ENCODE measurements at regions of chr16 and their contacts with region 1.

Region 1: DNA sequence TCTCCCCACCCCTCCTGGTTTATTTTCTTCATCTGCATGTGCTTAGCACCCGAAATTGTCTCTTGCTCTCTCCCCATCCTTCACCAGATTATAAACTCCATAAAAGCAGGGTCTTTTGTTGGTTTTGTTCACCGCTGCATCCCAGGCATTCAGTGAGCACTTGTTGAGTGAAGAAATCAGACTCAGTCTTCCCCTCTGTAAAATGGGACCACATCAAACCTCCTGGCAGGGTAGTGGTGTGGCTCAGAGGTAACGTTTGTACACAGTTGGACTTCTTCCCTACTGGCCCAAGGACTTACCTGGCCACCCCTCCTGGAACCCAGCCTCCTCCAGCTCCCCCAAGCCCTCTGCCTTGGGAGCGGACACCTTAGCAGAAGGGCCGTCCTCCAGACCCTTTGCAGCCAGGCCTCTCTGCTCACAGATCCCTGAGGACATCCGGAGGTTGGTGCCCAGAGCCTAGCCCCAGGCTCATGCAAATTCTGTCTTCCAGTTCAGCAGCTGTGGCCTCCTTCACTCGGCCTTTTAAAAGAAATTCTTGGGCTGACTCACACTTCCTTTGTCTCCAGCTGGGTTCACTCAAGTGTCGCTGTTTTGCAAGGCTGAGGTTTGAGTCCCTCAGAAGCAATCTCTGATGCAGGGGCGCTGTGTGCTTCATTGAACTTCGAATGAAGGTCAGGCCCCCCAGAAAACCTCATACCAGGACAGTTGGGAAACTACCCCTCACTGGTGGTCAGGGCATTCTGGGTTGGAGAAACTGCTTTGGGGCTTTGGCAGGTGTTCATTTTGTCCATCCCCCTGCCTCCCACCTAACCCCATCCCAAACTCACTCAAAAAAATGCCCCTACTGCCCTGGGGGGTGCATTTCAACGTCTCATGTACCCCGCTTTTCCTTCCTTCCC is 16.8 kb upstream of the RMI2 start:
- DNase-seq: peak; percentile 90
- ATAC-seq: peak; percentile 70
- H3K4me3 ChIP-seq: peak overlapping the region in 4 of 5 experiments; percentile 30 to 64 (median 36)
- H3K4me3 Mint-ChIP-seq: peak overlapping the region; percentile 81
- H3K27ac ChIP-seq: peak overlapping the region; percentile 91 to 94
- H3K27ac Mint-ChIP-seq: peak overlapping the region; percentile 93
- H3K4me1 ChIP-seq: peaks cover 59 to 69% of the 10 kb centered on the region in 2 donors
- H3K4me1 Mint-ChIP-seq: peaks cover 62% of the 10 kb centered on the region
- H3K27me3 ChIP-seq: no peaks in the 10 kb centered on the region
- H3K27me3 Mint-ChIP-seq: no peaks in the 10 kb centered on the region
- CTCF ChIP-seq: no peak

Region 2: GRCh38 chr16:11345040-11345862 is 16.8 kb after region 1 on chr16 and contains the start of gene RMI2:
- CTCF ChIA-PET with region 1: interaction called, 3 read pairs
- POLR2A ChIA-PET with region 1: interaction called, 7 read pairs
- intact Hi-C with region 1: loop called (anchors 1 kb)
- DNase-seq: peak; percentile 97
- ATAC-seq: peak; percentile 100
- H3K4me3 ChIP-seq: peak within 1 kb of the TSS; percentile 61 to 76 (median 70)
- H3K4me3 Mint-ChIP-seq: peak within 1 kb of the TSS; percentile 90
- H3K27ac ChIP-seq: peak within 1 kb of the TSS in 1 of 2 donors; percentile 26
- H3K27ac Mint-ChIP-seq: peak within 1 kb of the TSS; percentile 78
- H3K4me1 ChIP-seq: peaks cover 8 to 25% of the 10 kb centered on the region in 2 donors
- H3K4me1 Mint-ChIP-seq: peaks cover 39% of the 10 kb centered on the region
- H3K27me3 ChIP-seq: no peaks in the 10 kb centered on the region
- H3K27me3 Mint-ChIP-seq: no peaks in the 10 kb centered on the region
- CTCF ChIP-seq: no peak
- total RNA-seq, gene RMI2: 25.5 and 27.0 TPM in 2 replicates

Region 3: DNA sequence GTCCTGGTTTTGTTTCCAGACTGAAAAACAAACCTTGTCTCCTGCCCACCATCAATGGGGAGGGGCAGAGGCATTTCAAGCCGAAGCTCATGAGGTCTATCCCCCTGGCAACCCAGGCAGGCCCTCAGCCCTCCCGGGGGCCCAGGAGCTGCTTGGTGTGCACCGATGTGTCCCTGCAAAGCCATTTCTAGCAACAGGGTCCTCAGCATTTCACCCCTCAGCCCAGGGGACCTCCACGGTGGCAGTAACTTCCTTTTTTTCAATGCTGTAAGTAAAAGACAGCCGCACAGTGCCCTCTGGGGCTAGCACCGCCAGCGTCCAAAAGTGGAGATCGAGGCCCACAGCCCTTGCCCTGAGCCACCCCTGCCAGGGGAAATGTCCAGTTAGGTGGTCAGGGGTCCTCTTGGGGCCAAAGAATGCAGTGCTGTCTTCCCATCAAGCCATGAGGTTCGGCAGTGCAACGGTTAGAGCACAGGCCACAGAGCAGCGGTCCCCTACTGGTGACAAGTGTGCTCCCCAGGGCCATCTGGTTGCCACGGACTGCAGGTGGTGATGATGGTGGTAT is 178.4 kb after region 1 on chr16:
- CTCF ChIA-PET with region 1: no interaction called
- POLR2A ChIA-PET with region 1: no interaction called
- intact Hi-C with region 1: no loop called
- DNase-seq: peak; percentile 71
- ATAC-seq: peak; percentile 83
- H3K4me3 ChIP-seq: peak overlapping the region in 4 of 5 experiments; percentile 24 to 49 (median 41)
- H3K4me3 Mint-ChIP-seq: peak overlapping the region; percentile 86
- H3K27ac ChIP-seq: peak overlapping the region; percentile 26 to 48
- H3K27ac Mint-ChIP-seq: peak overlapping the region; percentile 83
- H3K4me1 ChIP-seq: peaks cover 8 to 13% of the 10 kb centered on the region in 2 donors
- H3K4me1 Mint-ChIP-seq: peaks cover 15% of the 10 kb centered on the region
- H3K27me3 ChIP-seq: no peaks in the 10 kb centered on the region
- H3K27me3 Mint-ChIP-seq: no peaks in the 10 kb centered on the region
- CTCF ChIP-seq: peak; percentile 46

Measured in B cell (primary cell).